H1 (cell line): ENCODE measurements at regions of chr11 and their contacts with region 1.

Region 1: GRCh38 chr11:78201096-78201818 is 12.5 kb downstream of the USP35 start:
- DNase-seq: no peak
- H3K4me3 ChIP-seq: no peak overlapping the region
- H3K27ac ChIP-seq: no peak overlapping the region
- H3K4me1 ChIP-seq: no peaks in the 10 kb centered on the region
- H3K27me3 ChIP-seq: no peaks in the 10 kb centered on the region
- CTCF ChIP-seq: no peak
- EP300 ChIP-seq: no peak
- POLR2A ChIP-seq: no peak
- RAD21 ChIP-seq: no peak

Region 2: GRCh38 chr11:78188286-78189173 is 12.7 kb before region 1 on chr11 and contains the starts of genes KCTD21 and USP35:
- CTCF ChIA-PET with region 1: interaction called, 4 read pairs
- POLR2A ChIA-PET with region 1: interaction called, 16 read pairs
- DNase-seq: peak; percentile 92 to 95
- H3K4me3 ChIP-seq: peak within 1 kb of the TSS; percentile 54 to 84 (median 79)
- H3K27ac ChIP-seq: no peak within 1 kb of the TSS
- H3K4me1 ChIP-seq: peaks cover 0 to 11% (median 2%) of the 10 kb centered on the region in 4 experiments; a peak in 6 of 7 replicates
- H3K27me3 ChIP-seq: peaks cover 0 to 4% (median 2%) of the 10 kb centered on the region in 4 experiments; a peak in 1 of 7 replicates
- CTCF ChIP-seq: no peak
- EP300 ChIP-seq: no peak
- POLR2A ChIP-seq: no peak
- RAD21 ChIP-seq: no peak
- total RNA-seq, gene KCTD21: 4.1 and 6.2 TPM in 2 replicates
- total RNA-seq, gene USP35: 6.8 and 7.8 TPM in 2 replicates

Region 3: GRCh38 chr11:78268591-78269410 is 67.5 kb after region 1 on chr11:
- CTCF ChIA-PET with region 1: no interaction called
- POLR2A ChIA-PET with region 1: no interaction called
- DNase-seq: no peak
- H3K4me3 ChIP-seq: no peak overlapping the region
- H3K27ac ChIP-seq: no peak overlapping the region
- H3K4me1 ChIP-seq: no peaks in the 10 kb centered on the region
- H3K27me3 ChIP-seq: no peaks in the 10 kb centered on the region
- CTCF ChIP-seq: no peak
- EP300 ChIP-seq: no peak
- POLR2A ChIP-seq: no peak
- RAD21 ChIP-seq: no peak